Naive thymus-derived CD4-positive, alpha-beta T cell (primary cell): ENCODE measurements at regions of chr12 and their contacts with region 1.

Region 1: DNA sequence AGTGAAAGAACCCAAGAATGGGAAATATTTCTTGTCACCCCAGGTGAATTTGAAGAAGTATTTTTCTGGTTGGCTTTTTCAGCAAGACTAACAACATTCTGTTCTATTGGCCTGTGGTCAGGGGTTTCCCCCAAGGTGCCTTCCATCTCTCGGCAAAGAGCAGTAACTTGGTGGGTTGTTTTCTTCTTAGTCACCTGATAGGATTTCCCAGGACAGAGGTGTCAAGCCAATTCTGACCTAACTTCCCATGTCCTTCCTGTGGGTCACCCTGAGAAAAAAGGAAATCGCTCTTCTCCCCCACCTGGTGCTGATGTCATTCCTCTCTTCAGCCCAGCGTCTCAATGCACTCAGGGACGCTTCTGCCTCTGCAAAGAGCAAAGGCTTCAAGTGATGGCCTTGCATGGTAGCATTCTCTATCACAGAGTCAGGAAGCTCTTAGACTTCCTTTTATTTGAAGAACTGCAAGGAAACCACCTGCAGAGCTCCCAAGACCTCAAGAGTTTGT is 16.1 kb upstream of the IFNG start:
- DNase-seq: peak; percentile 35 to 90 (median 86)
- ATAC-seq: peak; percentile 93
- H3K4me3 ChIP-seq: peak overlapping the region; percentile 40
- H3K4me3 Mint-ChIP-seq: peak overlapping the region; percentile 69 to 86 (median 84)
- H3K27ac ChIP-seq: peak overlapping the region; percentile 78
- H3K27ac Mint-ChIP-seq: peak overlapping the region; percentile 87 to 97 (median 93)
- H3K4me1 ChIP-seq: peaks cover 20 to 65% of the 10 kb centered on the region in 2 donors
- H3K4me1 Mint-ChIP-seq: peaks cover 30 to 82% (median 67%) of the 10 kb centered on the region in 7 donors
- H3K27me3 ChIP-seq: no peaks in the 10 kb centered on the region
- H3K27me3 Mint-ChIP-seq: no peaks in the 10 kb centered on the region

Region 2: DNA sequence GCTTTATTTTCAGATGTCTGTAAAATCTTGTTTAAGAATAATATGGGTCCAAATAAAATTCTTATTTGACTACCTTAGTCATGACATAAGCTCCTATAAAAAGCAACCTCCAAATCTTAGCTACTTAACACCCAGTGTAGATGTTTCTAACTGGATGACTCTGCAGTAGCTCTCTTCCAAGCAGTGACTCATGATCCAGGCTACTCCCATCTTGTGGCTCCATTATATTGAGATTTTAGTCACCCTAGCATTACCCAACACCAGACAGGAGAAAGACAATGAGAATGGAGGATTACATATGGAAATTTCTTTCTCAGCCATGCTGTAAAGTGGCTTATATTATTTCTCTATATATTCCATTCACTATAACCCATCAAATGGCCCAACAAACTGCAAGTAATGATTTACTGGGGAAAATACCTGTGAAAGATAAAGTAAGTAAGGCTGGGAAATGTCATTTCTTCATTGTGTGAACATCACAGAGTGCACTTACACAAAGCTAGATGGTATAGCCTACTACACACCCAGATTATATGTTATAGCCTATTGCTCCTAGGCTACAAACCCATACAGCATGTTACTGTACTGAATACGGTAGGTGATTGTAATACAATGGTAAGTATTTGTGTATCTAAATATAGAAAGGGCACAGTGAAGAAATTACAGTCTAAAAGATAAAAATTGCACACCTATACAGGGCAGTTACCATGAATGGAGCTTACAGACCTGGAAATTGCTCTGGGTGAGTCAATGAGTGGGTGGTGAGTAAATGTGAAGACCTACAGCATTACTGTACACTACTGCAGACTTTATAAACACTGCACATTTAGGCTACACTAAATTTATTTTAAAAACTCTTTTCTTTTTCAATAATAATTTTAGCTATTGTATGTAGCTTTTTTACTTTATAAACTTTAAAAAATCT is 363.9 kb before region 1 on chr12:
- CTCF ChIA-PET with region 1: no interaction called
- POLR2A ChIA-PET with region 1: no interaction called
- intact Hi-C with region 1: no loop called
- DNase-seq: no peak
- ATAC-seq: no peak
- H3K4me3 ChIP-seq: no peak overlapping the region
- H3K4me3 Mint-ChIP-seq: no peak overlapping the region
- H3K27ac ChIP-seq: no peak overlapping the region
- H3K27ac Mint-ChIP-seq: no peak overlapping the region
- H3K4me1 ChIP-seq: no peaks in the 10 kb centered on the region
- H3K4me1 Mint-ChIP-seq: peaks cover 0 to 12% (median 5%) of the 10 kb centered on the region in 7 donors
- H3K27me3 ChIP-seq: no peaks in the 10 kb centered on the region
- H3K27me3 Mint-ChIP-seq: no peaks in the 10 kb centered on the region

Region 3: DNA sequence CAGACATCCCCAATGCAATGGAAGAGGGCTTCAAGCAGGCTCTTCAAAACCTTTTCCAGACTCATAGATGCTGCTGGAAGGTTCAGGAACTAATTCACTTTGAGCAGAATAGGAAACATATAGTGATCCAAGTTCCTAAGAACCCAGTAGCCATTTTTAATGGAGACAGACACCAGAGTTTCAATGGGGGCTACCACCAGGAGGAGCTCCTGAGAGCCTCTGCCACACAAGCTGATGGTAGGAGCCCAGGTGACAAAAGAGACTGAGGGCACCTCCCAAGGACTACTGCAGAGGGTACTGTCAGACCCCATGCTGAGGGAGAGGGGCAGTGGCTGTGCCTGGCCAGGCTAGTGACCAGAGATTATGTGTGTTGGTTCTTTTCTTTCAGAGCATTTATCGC is 62.0 kb before region 1 on chr12:
- CTCF ChIA-PET with region 1: interaction called, 3 read pairs
- POLR2A ChIA-PET with region 1: no interaction called
- intact Hi-C with region 1: loop called (anchors 2 to 5 kb)
- DNase-seq: peak in 6 of 9 donors; percentile 5 to 28 (median 21)
- ATAC-seq: peak; percentile 55
- H3K4me3 ChIP-seq: no peak overlapping the region
- H3K4me3 Mint-ChIP-seq: no peak overlapping the region
- H3K27ac ChIP-seq: no peak overlapping the region
- H3K27ac Mint-ChIP-seq: peak overlapping the region in 1 of 9 donors; percentile 28
- H3K4me1 ChIP-seq: peaks cover 0 to 27% of the 10 kb centered on the region in 2 donors
- H3K4me1 Mint-ChIP-seq: peaks cover 8 to 41% (median 14%) of the 10 kb centered on the region in 7 donors
- H3K27me3 ChIP-seq: no peaks in the 10 kb centered on the region
- H3K27me3 Mint-ChIP-seq: no peaks in the 10 kb centered on the region

Region 4: DNA sequence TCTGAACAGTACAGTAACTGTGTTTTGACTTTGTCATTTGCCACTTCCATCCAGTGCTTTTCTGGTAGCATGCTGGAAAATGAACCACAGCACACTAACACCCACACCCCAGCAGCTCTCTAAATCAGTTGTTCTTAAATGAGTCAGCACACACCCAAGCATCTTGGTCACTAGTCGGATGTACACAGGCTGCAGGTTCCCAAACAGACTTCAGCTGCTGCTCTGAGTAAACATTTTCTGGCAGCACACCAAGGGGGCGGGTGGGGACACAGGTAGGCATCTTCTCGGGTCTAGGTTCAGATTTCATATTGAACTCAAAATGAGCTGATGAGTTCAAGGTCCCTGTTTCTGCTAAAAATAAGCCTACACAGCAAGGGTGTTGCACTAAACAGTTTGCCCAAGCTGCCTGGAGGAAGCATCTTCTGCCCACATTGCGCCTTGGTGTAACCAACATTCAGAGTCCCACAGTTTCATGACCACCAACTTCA is 55.8 kb before region 1 on chr12:
- CTCF ChIA-PET with region 1: interaction called, 4 read pairs
- POLR2A ChIA-PET with region 1: no interaction called
- intact Hi-C with region 1: loop called in 1 of 2 experiments (anchors 5 kb)
- DNase-seq: peak in 1 of 9 donors; percentile 72
- ATAC-seq: peak; percentile 72
- H3K4me3 ChIP-seq: no peak overlapping the region
- H3K4me3 Mint-ChIP-seq: peak overlapping the region in 1 of 10 donors; percentile 63
- H3K27ac ChIP-seq: no peak overlapping the region
- H3K27ac Mint-ChIP-seq: peak overlapping the region in 3 of 9 donors; percentile 3 to 33 (median 9)
- H3K4me1 ChIP-seq: peaks cover 0 to 63% of the 10 kb centered on the region in 2 donors
- H3K4me1 Mint-ChIP-seq: peaks cover 8 to 31% (median 19%) of the 10 kb centered on the region in 7 donors
- H3K27me3 ChIP-seq: no peaks in the 10 kb centered on the region
- H3K27me3 Mint-ChIP-seq: no peaks in the 10 kb centered on the region

Region 5: DNA sequence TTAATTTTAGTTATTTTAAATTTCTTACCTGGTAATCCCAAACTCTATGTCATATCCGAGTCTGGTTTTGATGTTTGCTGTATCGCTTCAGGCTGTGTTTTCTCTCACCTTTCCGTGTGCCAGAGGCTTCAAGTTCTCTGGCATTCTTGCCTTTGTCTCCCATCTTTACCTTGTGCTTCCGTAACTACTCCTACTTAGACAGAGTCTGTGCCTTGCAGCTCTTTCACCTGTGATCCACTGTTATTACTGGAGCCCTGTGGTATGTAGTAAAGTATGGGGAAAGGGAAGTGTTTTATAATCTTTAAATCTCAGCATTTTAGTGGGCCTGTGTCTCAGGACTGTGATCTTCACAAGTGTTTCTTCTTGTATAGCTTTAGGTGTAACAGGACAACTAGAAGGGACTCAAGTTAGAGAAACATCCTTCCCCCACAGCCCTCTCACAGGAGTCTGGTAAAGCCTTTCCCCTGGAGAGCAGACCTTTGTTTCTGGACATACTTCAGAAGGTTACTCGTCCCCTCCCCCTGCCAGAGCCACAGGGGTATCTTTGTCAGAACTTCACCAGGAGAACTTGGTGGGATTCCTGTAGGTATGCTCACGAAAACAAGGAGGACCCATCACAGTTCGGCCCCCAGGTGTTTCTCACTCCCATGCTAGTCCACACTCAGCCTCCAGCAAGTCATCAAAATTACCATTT is 27.2 kb before region 1 on chr12:
- CTCF ChIA-PET with region 1: no interaction called
- POLR2A ChIA-PET with region 1: no interaction called
- intact Hi-C with region 1: no loop called
- DNase-seq: no peak
- ATAC-seq: no peak
- H3K4me3 ChIP-seq: no peak overlapping the region
- H3K4me3 Mint-ChIP-seq: no peak overlapping the region
- H3K27ac ChIP-seq: no peak overlapping the region
- H3K27ac Mint-ChIP-seq: no peak overlapping the region
- H3K4me1 ChIP-seq: no peaks in the 10 kb centered on the region
- H3K4me1 Mint-ChIP-seq: peaks cover 0 to 10% (median 5%) of the 10 kb centered on the region in 7 donors
- H3K27me3 ChIP-seq: no peaks in the 10 kb centered on the region
- H3K27me3 Mint-ChIP-seq: peaks cover 0 to 2% (median 0%) of the 10 kb centered on the region in 5 donors

Region 6: DNA sequence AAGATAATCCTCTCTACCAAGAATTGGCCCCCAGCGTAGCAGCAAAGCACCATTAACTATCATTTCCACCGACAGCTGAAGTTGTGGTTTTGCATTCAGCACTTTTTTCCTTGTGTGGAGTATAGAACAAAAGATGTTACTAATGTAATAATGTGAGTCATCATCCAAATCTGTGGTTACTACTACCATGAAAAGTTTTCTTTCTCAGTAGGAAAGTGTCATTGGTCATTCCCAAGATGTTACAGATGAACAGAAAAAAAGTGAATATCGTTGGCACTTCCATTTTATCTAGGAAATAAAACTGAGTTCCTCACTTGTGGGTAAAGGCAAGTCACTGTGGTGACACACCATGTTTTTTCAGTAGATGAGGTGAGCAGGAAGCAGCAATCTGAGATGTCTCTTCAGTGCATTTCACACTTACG is 14.2 kb after region 1 on chr12:
- CTCF ChIA-PET with region 1: interaction called, 3 read pairs
- POLR2A ChIA-PET with region 1: interaction called, 12 read pairs
- intact Hi-C with region 1: loop called (anchors 1 to 2 kb)
- DNase-seq: peak in 7 of 9 donors; percentile 24 to 53 (median 45)
- ATAC-seq: peak; percentile 75
- H3K4me3 ChIP-seq: peak overlapping the region; percentile 12
- H3K4me3 Mint-ChIP-seq: peak overlapping the region in 8 of 10 donors; percentile 47 to 81 (median 66)
- H3K27ac ChIP-seq: no peak overlapping the region
- H3K27ac Mint-ChIP-seq: peak overlapping the region in 8 of 9 donors; percentile 52 to 88 (median 75)
- H3K4me1 ChIP-seq: peaks cover 10 to 11% of the 10 kb centered on the region in 2 donors
- H3K4me1 Mint-ChIP-seq: peaks cover 0 to 37% (median 24%) of the 10 kb centered on the region in 7 donors
- H3K27me3 ChIP-seq: no peaks in the 10 kb centered on the region
- H3K27me3 Mint-ChIP-seq: peaks cover 0 to 2% (median 0%) of the 10 kb centered on the region in 5 donors

Region 7: DNA sequence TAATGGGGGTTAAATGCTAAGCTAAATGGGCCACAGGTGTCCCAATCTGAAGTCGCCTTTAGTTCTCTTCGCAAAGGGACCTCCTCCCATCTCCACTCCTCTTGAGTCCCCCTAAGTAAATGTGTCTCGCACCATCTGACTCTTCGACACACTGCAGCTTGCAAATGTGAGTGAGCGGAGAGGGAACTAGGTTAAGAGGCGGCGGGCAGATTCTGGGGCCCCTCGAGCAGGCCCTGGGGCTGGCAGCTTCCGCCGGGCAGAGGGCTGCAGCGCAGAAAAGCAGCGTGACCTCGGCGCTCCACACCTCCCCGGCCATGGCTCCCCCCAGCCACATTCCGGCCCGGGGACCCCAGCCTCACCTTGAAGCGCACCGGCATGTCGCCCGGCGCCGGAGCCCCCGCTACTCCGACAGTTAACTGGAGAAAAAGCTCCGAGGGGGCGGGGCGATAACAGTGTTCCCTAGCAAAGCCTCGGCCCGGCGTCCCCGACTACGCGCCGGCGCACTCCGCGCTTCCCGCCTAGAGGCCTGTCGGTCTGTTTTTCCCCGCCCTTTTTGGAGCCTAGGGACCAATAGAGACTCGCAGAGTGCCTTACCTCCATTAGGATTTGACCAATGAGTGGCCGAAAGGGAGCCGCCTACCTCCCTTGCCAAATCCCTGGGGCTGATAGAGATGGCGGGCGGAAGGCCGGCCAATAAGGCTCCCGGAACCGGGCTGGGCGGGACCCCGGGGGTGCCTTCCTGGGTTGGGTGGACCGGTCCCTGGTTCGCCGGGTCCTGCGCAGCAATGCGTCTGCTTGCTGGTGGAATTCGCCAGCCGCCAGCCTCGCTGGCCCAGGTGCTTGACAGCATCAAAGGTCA is 156.5 kb after region 1 on chr12 and contains the start of gene MDM1:
- CTCF ChIA-PET with region 1: no interaction called
- POLR2A ChIA-PET with region 1: no interaction called
- intact Hi-C with region 1: loop called in 1 of 2 experiments (anchors 1 kb)
- DNase-seq: peak; percentile 85 to 96 (median 95)
- ATAC-seq: peak; percentile 98
- H3K4me3 ChIP-seq: peak within 1 kb of the TSS; percentile 68
- H3K4me3 Mint-ChIP-seq: peak within 1 kb of the TSS; percentile 85 to 93 (median 91)
- H3K27ac ChIP-seq: peak within 1 kb of the TSS; percentile 73
- H3K27ac Mint-ChIP-seq: peak within 1 kb of the TSS; percentile 78 to 93 (median 90)
- H3K4me1 ChIP-seq: peaks cover 9 to 26% of the 10 kb centered on the region in 2 donors
- H3K4me1 Mint-ChIP-seq: peaks cover 33 to 61% (median 52%) of the 10 kb centered on the region in 7 donors
- H3K27me3 ChIP-seq: no peaks in the 10 kb centered on the region
- H3K27me3 Mint-ChIP-seq: peaks cover 0 to 15% (median 0%) of the 10 kb centered on the region in 5 donors
- total RNA-seq, gene MDM1: 16.2 to 38.4 (median 23.4) TPM